Ascending aorta (tissue), 2 donors: ENCODE measurements at regions of chr14 and their contacts with region 1.

Region 1: GRCh38 chr14:99884834-99885648 is 91.8 kb downstream of the EML1 start:
- DNase-seq: no peak
- H3K4me3 ChIP-seq: no peak overlapping the region
- H3K27ac ChIP-seq: no peak overlapping the region
- H3K4me1 ChIP-seq: peaks cover 0 to 4% of the 10 kb centered on the region in 2 donors
- H3K27me3 ChIP-seq: no peaks in the 10 kb centered on the region
- CTCF ChIP-seq: peak; percentile 44 to 76 (median 63)

Region 2: DNA sequence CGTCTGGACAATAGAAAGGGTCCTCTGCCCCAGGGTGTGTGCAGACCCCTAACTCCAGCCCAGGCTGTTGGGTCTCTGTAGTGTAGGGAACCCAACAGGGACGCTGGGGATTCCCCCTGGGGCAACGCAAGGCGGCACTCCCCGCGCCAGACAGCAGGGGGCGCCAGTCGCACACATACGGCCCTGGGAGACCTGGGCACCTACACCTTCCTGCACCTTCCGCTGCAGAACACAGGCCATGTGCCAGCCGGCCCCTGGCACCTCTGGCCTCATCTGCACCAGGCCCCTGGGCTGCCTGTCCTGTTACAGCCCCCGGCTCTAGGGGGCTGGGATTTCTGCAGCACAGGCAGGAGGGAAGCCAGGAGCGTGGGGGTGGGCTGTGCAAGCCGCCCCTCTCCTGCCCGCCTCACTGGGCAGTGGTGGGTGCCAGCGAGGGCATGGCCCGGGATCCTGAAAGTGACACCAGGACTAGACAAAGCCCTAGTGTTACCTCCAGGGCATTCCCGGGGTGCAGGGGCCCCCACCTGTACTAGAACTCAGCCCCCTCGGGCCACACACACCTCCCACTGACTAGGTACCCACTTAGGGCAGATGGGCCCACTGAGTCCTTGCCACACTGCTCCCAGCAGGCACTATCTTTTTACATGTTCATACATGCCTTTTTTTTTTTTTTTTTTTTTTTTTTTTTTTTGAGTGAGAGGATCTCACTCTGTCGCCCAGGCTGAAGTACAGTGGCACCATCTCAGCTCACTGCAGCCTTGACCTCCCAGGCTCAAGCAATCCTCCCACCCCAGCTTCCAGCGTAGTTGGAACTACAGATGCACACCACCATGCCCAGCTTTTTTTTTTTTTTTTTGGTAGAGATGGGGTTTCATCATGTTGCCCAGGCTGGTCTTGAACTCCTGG is 366.3 kb before region 1 on chr14:
- intact Hi-C with region 1: loop called (anchors 5 kb)
- DNase-seq: peak in 1 of 2 donors; percentile 76
- H3K4me3 ChIP-seq: no peak overlapping the region
- H3K27ac ChIP-seq: no peak overlapping the region
- H3K4me1 ChIP-seq: no peaks in the 10 kb centered on the region
- H3K27me3 ChIP-seq: no peaks in the 10 kb centered on the region
- CTCF ChIP-seq: peak; percentile 87 to 94 (median 92)

Region 3: GRCh38 chr14:99729991-99730868 is 154.8 kb before region 1 on chr14:
- intact Hi-C with region 1: loop called (anchors 1 kb)
- DNase-seq: peak; percentile 1 to 81
- H3K4me3 ChIP-seq: peak overlapping the region; percentile 52 to 85
- H3K27ac ChIP-seq: peak overlapping the region; percentile 22 to 30
- H3K4me1 ChIP-seq: peaks cover 3 to 13% of the 10 kb centered on the region in 2 donors
- H3K27me3 ChIP-seq: no peaks in the 10 kb centered on the region
- CTCF ChIP-seq: peak; percentile 66 to 89 (median 78)

Region 4: DNA sequence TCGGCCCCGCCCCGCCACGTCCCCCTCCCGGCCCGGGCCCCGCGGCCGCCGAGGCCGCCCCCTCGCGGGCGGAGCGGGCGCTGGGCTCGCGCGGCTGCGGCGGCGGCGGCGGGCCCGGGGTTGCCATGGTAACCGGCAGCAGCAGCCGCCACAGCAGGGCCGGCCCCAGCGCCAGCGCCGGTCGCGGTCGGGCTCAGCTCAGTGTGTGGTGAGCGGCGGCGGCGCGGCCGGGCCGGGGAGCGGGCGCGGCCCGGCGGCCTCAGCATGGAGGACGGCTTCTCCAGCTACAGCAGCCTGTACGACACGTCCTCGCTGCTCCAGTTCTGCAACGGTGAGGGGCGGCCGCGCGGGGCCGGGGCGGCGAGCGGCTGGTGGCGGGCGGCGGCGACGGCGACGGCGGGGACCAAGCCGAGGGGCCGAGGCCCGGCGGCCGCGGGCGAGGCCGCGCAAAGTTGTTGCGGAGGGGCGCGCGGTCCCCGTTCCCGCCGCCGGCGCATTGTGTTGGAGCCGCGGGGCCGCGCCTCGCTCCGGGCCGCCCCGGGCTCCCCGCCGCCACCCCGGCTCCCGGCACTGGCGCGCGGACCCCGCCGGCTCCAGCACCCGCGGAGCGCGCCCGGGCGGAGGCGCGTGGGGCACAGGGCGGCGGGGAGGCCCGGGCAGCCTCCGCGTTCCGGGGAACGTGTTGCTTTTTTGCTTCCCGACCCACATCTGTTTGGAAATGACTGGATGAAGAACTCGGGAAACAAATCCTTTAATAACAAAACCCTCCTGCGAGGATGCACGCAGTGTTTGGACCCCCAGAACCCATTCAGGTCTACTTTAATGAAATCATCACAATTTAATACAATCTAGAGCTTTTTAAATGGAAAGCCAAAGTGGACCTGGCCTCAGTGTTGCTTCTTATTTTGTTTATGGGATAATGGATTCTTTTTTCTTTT is 91.6 kb before region 1 on chr14 and contains the start of gene EML1:
- intact Hi-C with region 1: loop called (anchors 1 kb)
- DNase-seq: peak in 1 of 2 donors; percentile 89
- H3K4me3 ChIP-seq: peak within 1 kb of the TSS; percentile 73 to 84
- H3K27ac ChIP-seq: peak within 1 kb of the TSS; percentile 88 to 96
- H3K4me1 ChIP-seq: peaks cover 0 to 6% of the 10 kb centered on the region in 2 donors
- H3K27me3 ChIP-seq: no peaks in the 10 kb centered on the region
- CTCF ChIP-seq: no peak
- total RNA-seq, gene EML1: 28.3 TPM